ENCODE measurements at regions of chr6 and their contacts with region 1.

Region 1: DNA sequence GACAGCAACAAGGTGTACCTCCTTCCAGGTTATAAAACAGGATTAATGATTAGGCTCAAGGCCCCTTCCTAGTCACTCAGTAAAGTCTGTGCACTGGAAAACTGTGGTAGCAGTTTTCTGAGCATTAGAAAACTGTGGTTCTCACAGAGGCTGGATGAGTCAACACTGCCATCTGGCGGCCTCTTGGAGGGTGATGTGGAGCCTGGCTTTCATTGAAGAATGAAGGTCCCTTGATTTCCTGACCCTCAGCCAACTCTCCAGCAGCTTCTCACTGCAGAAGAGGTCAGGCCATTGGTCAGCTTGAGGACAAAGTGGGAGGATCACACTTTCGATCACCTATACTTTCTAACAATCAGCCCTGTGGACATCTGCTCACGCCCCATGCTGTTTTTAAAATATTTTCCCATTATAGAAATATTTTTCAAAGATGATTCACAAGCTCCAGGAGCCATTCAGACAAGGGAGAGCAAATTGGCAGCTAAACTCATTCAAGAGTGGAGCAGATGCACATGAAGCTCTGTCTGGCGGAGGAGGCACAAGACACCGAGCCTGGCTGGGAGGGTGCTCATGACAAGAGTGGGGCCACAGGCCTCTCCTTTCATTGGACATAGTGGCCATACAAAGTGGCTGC is 23.2 kb downstream of the PSMB1 start:
- DNase-seq: peak; percentile 77 to 87 (median 84)
- ATAC-seq: peak; percentile 92
- H3K4me3 ChIP-seq: no peak overlapping the region
- H3K27ac ChIP-seq: no peak overlapping the region
- H3K4me1 ChIP-seq: no peaks in the 10 kb centered on the region
- H3K27me3 ChIP-seq: peaks cover 0 to 2% of the 10 kb centered on the region in 2 experiments; a peak in 1 of 5 replicates
- CTCF ChIP-seq: peak; percentile 91 to 97 (median 94)
- EP300 ChIP-seq: no peak
- POLR2A ChIP-seq: no peak
- RAD21 ChIP-seq: peak; percentile 86 to 96

Region 2: GRCh38 chr6:168895102-168895812 is 1634.7 kb before region 1 on chr6:
- CTCF ChIA-PET with region 1: interaction called, 7 read pairs
- POLR2A ChIA-PET with region 1: no interaction called
- in situ Hi-C with region 1: no loop called
- intact Hi-C with region 1: loop called (anchors 10 kb)
- DNase-seq: peak; percentile 81 to 88 (median 86)
- ATAC-seq: peak; percentile 99
- H3K4me3 ChIP-seq: no peak overlapping the region
- H3K27ac ChIP-seq: no peak overlapping the region
- H3K4me1 ChIP-seq: no peaks in the 10 kb centered on the region
- H3K27me3 ChIP-seq: peaks cover 13 to 47% of the 10 kb centered on the region in 2 experiments; a peak in 4 of 5 replicates
- CTCF ChIP-seq: peak; percentile 92 to 96 (median 95)
- EP300 ChIP-seq: 0 out of 2 replicates have a peak, but pooled peaks have one; percentile 24
- POLR2A ChIP-seq: no peak
- RAD21 ChIP-seq: peak; percentile 91 to 92

Region 3: GRCh38 chr6:168956884-168957730 is 1572.8 kb before region 1 on chr6:
- CTCF ChIA-PET with region 1: interaction called, 6 read pairs
- POLR2A ChIA-PET with region 1: no interaction called
- in situ Hi-C with region 1: no loop called
- intact Hi-C with region 1: loop called (anchors 5 kb)
- DNase-seq: peak; percentile 34 to 70 (median 54)
- ATAC-seq: peak; percentile 95
- H3K4me3 ChIP-seq: no peak overlapping the region
- H3K27ac ChIP-seq: no peak overlapping the region
- H3K4me1 ChIP-seq: no peaks in the 10 kb centered on the region
- H3K27me3 ChIP-seq: peaks cover 0 to 12% of the 10 kb centered on the region in 2 experiments; a peak in 1 of 5 replicates
- CTCF ChIP-seq: peak; percentile 72 to 85 (median 84)
- EP300 ChIP-seq: no peak
- POLR2A ChIP-seq: no peak
- RAD21 ChIP-seq: peak; percentile 71 to 80

Region 4: DNA sequence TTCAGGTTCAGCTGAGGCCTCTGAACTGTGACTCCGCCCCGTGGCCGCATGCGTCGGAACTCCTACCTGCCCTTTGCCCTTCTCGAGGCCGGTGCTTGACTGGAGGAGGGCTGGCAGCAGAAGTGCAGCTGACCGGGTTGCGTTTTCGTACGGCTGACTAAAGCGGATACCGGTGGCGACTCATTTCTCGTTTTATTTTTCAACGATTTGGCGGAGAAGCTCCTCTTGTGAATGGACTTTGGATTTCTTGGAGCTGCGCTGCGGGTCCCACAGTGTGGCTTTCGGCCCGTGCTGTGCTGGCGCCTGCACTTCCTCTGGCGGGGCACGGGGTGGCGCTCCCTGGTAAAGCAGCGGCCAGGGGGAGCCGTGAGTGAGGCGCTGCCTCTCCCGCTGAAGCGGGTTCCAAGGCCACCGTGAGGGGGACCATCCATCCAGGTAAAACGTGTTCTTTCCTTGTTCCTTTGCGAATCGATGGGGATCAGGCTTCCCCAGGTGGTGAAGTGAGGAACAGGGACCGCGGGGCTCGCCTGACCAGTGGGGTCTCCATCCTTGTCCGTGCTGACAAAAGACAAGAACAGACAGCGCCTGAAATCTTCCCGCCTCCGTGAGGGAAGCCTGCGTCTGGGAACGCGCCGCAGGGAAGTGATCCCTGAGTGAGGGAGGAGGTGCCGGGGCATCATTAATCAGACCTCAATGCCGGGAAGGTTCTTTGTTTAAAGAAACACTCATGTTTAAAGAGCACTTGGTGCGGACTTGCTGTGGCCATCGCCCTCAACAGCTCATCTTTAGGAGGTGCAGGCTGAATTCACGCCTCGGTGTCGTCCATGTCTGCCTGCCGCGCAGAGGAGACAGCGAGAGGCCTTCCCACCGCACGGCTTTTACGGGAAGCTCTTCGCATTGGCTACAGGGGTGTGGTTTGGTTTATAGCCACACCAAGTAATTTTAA is 739.7 kb before region 1 on chr6:
- CTCF ChIA-PET with region 1: interaction called, 20 read pairs
- POLR2A ChIA-PET with region 1: interaction called, 3 read pairs
- in situ Hi-C with region 1: no loop called
- intact Hi-C with region 1: loop called (anchors 1 kb)
- DNase-seq: peak; percentile 81 to 91 (median 90)
- ATAC-seq: peak; percentile 97
- H3K4me3 ChIP-seq: peak overlapping the region; percentile 26
- H3K27ac ChIP-seq: no peak overlapping the region
- H3K4me1 ChIP-seq: peaks cover 11 to 17% of the 10 kb centered on the region in 2 experiments; a peak in 3 of 5 replicates
- H3K27me3 ChIP-seq: peaks cover 63 to 87% of the 10 kb centered on the region in 2 experiments
- CTCF ChIP-seq: peak; percentile 96 to 99 (median 99)
- EP300 ChIP-seq: no peak
- POLR2A ChIP-seq: no peak
- RAD21 ChIP-seq: peak; percentile 88 to 93

Region 5: GRCh38 chr6:169831450-169832246 is 698.3 kb before region 1 on chr6:
- CTCF ChIA-PET with region 1: interaction called, 5 read pairs
- POLR2A ChIA-PET with region 1: interaction called, 3 read pairs
- in situ Hi-C with region 1: no loop called
- intact Hi-C with region 1: loop called (anchors 1 kb)
- DNase-seq: peak; percentile 82 to 90 (median 85)
- ATAC-seq: peak; percentile 98
- H3K4me3 ChIP-seq: no peak overlapping the region
- H3K27ac ChIP-seq: no peak overlapping the region
- H3K4me1 ChIP-seq: peaks cover 0 to 3% of the 10 kb centered on the region in 2 experiments; a peak in 1 of 5 replicates
- H3K27me3 ChIP-seq: peaks cover 15 to 36% of the 10 kb centered on the region in 2 experiments; a peak in 3 of 5 replicates
- CTCF ChIP-seq: peak; percentile 89 to 98 (median 94)
- EP300 ChIP-seq: no peak
- POLR2A ChIP-seq: no peak
- RAD21 ChIP-seq: peak; percentile 85 to 92

Region 6: DNA sequence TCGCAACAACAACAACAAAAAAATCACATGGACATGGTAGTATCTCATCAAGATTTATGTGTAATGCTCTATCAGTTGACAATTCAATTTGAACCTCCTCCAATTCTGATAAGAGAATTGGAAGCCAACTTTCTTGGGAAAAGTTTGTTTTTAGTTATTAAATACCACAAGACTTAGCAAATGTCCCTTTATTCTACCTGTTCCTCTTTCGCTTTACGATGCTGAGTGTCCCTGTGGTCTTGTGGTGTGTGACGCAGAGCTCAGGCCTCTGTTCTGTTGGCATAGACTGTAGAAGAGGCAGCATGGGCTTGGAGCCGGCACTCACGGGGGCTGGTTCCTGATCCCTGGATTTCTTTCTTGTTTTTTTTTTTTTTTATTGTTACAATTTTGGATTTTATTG is 53.6 kb before region 1 on chr6:
- CTCF ChIA-PET with region 1: no interaction called
- POLR2A ChIA-PET with region 1: no interaction called
- in situ Hi-C with region 1: no loop called
- intact Hi-C with region 1: loop called (anchors 10 kb)
- DNase-seq: no peak
- ATAC-seq: no peak
- H3K4me3 ChIP-seq: no peak overlapping the region
- H3K27ac ChIP-seq: no peak overlapping the region
- H3K4me1 ChIP-seq: no peaks in the 10 kb centered on the region
- H3K27me3 ChIP-seq: peaks cover 34 to 73% of the 10 kb centered on the region in 2 experiments; a peak in 4 of 5 replicates
- CTCF ChIP-seq: no peak
- EP300 ChIP-seq: no peak
- POLR2A ChIP-seq: no peak
- RAD21 ChIP-seq: no peak

Region 7: GRCh38 chr6:170596426-170596825 is 66.5 kb after region 1 on chr6:
- CTCF ChIA-PET with region 1: no interaction called
- POLR2A ChIA-PET with region 1: no interaction called
- in situ Hi-C with region 1: no loop called
- intact Hi-C with region 1: no loop called
- DNase-seq: no peak
- ATAC-seq: no peak
- H3K4me3 ChIP-seq: no peak overlapping the region
- H3K27ac ChIP-seq: no peak overlapping the region
- H3K4me1 ChIP-seq: no peaks in the 10 kb centered on the region
- H3K27me3 ChIP-seq: no peaks in the 10 kb centered on the region
- CTCF ChIP-seq: no peak
- EP300 ChIP-seq: no peak
- POLR2A ChIP-seq: no peak
- RAD21 ChIP-seq: no peak